MCF 10A (cell line): ENCODE measurements at regions of chr1 and their contacts with region 1.

Region 1: DNA sequence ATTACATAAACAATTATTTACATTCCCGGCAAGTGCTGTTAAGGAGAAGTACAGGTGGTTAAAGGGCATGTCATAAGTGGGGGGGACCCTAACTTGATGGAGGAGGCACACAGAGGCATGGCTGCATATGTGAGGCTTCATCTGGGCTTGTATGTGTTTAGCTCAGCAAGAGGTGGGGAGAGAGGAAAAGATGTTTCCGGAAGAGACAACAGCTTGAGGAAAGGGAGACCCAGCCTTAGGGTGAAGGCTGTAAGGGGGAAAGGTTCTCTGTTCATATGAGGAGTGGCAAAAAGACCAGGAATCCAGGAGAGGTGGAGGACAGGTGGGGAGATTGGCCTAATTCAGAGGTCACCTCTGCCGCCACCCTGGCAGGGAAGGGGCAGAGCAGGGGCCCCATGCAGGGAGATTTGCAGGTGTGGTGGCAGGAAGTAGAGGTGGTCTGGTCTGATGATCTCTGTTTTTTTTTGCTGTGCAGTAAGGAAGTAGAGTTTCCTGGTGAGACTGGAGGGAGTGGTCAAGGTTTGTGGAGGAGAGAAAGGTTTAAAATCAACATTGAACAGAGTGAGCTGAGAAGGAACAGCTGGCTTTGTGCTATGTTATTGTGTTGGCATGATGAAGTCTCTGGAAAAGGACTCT is 9.0 kb downstream of the TRAF5 start:
- DNase-seq: no peak
- H3K4me3 Mint-ChIP-seq: no peak overlapping the region
- H3K27ac Mint-ChIP-seq: no peak overlapping the region
- H3K4me1 Mint-ChIP-seq: peaks cover 22% of the 10 kb centered on the region
- H3K27me3 Mint-ChIP-seq: no peaks in the 10 kb centered on the region
- CTCF ChIP-seq: no peak

Region 2: GRCh38 chr1:211092955-211093354 is 242.7 kb before region 1 on chr1:
- CTCF ChIA-PET with region 1: no interaction called
- POLR2A ChIA-PET with region 1: no interaction called
- intact Hi-C with region 1: no loop called
- DNase-seq: no peak
- H3K4me3 Mint-ChIP-seq: no peak overlapping the region
- H3K27ac Mint-ChIP-seq: no peak overlapping the region
- H3K4me1 Mint-ChIP-seq: no peaks in the 10 kb centered on the region
- H3K27me3 Mint-ChIP-seq: peaks cover 11% of the 10 kb centered on the region
- CTCF ChIP-seq: no peak

Region 3: GRCh38 chr1:211352985-211353515 is 17.4 kb after region 1 on chr1:
- CTCF ChIA-PET with region 1: interaction called, 15 read pairs
- POLR2A ChIA-PET with region 1: interaction called, 3 read pairs
- intact Hi-C with region 1: no loop called
- DNase-seq: peak; percentile 78
- H3K4me3 Mint-ChIP-seq: no peak overlapping the region
- H3K27ac Mint-ChIP-seq: no peak overlapping the region
- H3K4me1 Mint-ChIP-seq: peaks cover 15% of the 10 kb centered on the region
- H3K27me3 Mint-ChIP-seq: no peaks in the 10 kb centered on the region
- CTCF ChIP-seq: peak; percentile 93